ENCODE measurements at regions of chr9 and their contacts with region 1.

Region 1: DNA sequence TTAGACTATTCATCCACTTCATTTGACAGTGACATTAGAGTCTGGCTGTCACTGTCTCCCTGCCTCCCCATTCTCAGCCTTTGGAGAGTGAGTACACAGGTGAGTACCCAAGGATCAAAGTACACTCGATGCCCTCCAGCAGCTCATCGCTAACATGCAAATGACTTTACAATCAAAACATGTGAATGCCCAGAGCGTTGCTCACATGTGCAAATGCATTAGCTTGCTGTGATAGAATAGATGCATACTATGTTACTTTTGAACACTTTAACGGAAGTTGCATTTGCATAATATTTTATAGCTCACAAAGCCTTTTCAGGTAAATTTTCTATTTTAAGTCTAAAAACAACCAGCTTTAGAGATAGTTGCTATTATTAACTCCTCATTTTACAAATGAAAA is 107.6 kb downstream of the SYK start:
- DNase-seq: peak; percentile 51
- H3K4me3 ChIP-seq: no peak overlapping the region
- H3K27ac ChIP-seq: no peak overlapping the region
- H3K4me1 ChIP-seq: peaks cover 39% of the 10 kb centered on the region
- CTCF ChIP-seq: no peak

Region 2: DNA sequence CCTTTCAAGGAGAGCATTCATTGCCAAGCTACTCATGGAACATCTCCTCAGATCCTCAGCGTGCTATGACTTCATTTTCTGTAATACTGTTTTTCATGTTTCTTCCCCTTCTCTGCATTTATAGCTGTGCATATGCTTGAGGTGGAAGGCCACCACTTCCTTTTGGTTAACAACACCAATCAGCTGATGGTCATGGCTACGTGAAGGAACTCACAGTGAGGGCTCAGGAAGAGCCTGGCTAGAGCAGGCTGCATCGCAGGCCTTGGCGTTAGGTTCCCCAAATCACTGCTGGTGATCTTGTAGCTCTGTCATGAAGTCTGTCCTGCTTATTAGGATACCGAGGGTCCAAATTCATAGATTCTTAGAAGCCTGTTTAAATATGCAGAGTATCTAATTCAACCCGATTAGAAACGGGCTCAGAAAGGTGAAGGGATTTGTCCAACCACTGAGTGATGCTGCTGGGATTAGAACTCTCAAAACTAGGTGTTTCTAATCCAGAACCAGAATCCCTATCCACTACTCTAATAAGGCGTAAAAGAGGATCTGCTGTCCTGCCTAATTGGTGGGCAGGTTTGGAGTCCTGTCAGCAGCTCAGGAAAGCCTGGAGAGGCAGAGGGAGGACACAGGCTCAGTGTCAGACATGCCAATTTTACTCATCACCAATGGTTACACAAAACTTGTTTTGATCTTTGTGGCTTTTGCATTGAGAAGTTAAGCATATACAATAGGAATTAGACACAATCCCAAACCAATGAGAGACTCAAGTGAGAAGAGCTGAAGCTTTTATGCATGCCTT is 100.1 kb before region 1 on chr9:
- CTCF ChIA-PET with region 1: no interaction called
- POLR2A ChIA-PET with region 1: no interaction called
- intact Hi-C with region 1: no loop called
- DNase-seq: peak; percentile 36
- H3K4me3 ChIP-seq: peak overlapping the region; percentile 8
- H3K27ac ChIP-seq: peak overlapping the region; percentile 95
- H3K4me1 ChIP-seq: peaks cover 98% of the 10 kb centered on the region
- CTCF ChIP-seq: no peak

Region 3: GRCh38 chr9:90881648-90882047 is 27.6 kb before region 1 on chr9:
- CTCF ChIA-PET with region 1: no interaction called
- POLR2A ChIA-PET with region 1: no interaction called
- intact Hi-C with region 1: no loop called
- DNase-seq: peak; percentile 98
- H3K4me3 ChIP-seq: peak overlapping the region; percentile 40
- H3K27ac ChIP-seq: peak overlapping the region; percentile 92
- H3K4me1 ChIP-seq: peaks cover 48% of the 10 kb centered on the region
- CTCF ChIP-seq: no peak

Region 4: DNA sequence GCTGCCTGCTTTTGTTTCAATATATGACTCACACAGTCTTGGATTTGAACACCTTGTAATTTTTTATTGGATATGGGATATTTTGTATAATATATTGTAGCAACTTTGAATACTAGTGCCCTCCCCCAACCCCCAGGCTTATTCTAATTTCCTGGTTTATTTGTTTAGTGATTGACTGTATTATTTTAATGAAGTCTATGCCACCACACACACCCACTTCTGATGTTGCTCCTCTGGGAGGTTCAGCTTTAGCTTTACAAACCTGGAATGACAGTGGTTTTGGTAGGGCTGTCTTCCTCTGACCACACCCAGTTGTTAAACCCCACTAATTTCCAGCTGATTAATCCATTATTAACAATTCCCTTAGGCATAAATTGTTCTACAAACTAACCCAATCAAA is 720.5 kb after region 1 on chr9:
- CTCF ChIA-PET with region 1: interaction called, 13 read pairs
- POLR2A ChIA-PET with region 1: no interaction called
- intact Hi-C with region 1: no loop called
- DNase-seq: no peak
- H3K4me3 ChIP-seq: no peak overlapping the region
- H3K27ac ChIP-seq: no peak overlapping the region
- H3K4me1 ChIP-seq: no peaks in the 10 kb centered on the region
- CTCF ChIP-seq: no peak